Left cardiac atrium (tissue), 4 donors: ENCODE measurements at regions of chr6 and their contacts with region 1.

Region 1: DNA sequence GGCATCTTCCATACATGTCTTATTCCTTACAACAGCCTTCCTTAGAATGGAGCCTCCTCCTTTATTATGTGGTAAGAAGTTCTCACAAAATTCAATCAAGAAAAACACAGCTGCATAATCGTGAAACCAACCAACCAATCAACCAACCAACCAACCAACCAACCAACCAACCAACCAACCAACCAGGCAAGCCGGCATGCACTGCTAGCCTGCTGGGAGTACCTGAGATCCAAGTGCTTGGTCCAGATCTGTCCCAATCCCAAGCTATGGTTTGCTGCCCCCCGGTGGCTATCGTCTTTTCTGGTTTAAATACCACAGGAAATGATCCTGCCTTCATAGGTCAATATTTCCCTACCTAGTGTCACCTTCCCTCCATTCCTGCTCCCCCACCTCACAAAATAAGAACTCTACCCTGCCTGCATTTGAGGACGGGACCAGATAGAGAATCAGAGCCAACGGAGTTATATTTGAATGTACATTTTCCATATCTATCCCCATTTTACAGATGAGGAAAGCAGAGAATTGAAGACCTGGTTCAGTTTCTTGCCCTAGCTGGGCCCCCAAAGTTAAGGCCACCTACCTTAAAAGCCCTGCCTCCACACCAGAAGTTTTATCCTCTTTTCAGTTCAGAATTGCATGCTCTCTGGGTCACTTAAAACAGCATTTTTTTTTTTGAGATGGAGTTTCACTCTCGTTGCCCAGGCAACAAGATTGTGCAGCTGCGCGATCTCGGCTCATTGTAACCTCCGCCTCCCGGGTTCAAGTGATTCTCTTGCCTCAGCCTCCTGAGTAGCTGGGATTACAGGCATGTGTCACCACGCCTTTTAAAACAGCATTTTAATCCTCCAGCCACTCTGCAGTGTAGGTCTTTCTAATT is 27.1 kb downstream of the RAB44 start:
- DNase-seq: peak; percentile 79
- ATAC-seq: peak; percentile 63 to 79

Region 2: GRCh38 chr6:36623547-36624459 is 100.9 kb before region 1 on chr6:
- intact Hi-C with region 1: loop called in 1 of 2 experiments (anchors 5 kb)
- DNase-seq: peak; percentile 87
- ATAC-seq: peak; percentile 58 to 68